Left cardiac atrium (tissue), 4 donors: ENCODE measurements at regions of chr6 and their contacts with region 1.

Region 1: GRCh38 chr6:26025894-26026832 is 61.1 kb upstream of the HFE start:
- DNase-seq: peak; percentile 95
- ATAC-seq: peak; percentile 68 to 70

Region 2: GRCh38 chr6:26045065-26045927 is 19.1 kb after region 1 on chr6:
- intact Hi-C with region 1: loop called in 1 of 2 experiments (anchors 2 kb)
- DNase-seq: peak; percentile 75
- ATAC-seq: peak; percentile 77 to 84

Region 3: DNA sequence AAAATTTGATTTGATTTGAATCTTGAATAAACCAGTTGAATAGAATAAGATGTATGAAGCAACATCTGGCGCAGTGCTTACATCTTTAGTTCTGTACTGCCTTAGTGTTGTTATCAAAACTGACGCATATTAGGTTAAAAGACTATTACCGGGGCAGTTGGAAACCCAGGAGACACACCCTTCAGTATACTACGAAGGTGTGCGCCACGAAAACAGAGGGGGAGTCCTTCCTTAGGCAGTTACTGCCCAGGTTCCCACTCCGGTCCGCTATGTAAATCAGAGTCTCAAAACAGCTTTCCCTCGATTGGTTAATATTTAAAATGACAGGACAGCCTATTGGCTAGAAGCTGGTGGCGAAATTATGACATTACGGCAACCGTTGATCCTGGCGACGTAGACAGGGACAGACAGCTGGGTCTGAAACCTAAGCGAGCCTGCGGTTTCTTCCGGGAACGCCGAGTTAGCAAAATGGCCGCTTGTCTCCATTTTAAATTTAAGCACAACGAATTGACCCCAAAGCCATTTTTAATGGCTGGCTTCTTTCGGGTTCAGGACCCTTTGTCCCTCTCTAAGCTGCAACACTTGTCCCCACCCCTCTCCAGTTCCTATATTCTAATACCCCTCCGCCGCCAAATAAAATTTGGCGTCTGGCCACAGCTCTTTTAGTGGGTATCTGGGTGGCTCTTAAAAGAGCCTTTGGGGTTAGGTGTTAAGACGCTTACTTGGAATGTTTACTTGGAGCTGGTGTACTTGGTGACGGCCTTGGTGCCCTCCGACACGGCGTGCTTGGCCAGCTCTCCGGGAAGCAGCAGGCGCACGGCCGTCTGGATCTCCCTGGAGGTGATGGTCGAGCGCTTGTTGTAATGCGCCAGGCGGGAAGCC is 96.9 kb after region 1 on chr6:
- intact Hi-C with region 1: no loop called
- DNase-seq: peak; percentile 97
- ATAC-seq: peak; percentile 87 to 88

Region 4: DNA sequence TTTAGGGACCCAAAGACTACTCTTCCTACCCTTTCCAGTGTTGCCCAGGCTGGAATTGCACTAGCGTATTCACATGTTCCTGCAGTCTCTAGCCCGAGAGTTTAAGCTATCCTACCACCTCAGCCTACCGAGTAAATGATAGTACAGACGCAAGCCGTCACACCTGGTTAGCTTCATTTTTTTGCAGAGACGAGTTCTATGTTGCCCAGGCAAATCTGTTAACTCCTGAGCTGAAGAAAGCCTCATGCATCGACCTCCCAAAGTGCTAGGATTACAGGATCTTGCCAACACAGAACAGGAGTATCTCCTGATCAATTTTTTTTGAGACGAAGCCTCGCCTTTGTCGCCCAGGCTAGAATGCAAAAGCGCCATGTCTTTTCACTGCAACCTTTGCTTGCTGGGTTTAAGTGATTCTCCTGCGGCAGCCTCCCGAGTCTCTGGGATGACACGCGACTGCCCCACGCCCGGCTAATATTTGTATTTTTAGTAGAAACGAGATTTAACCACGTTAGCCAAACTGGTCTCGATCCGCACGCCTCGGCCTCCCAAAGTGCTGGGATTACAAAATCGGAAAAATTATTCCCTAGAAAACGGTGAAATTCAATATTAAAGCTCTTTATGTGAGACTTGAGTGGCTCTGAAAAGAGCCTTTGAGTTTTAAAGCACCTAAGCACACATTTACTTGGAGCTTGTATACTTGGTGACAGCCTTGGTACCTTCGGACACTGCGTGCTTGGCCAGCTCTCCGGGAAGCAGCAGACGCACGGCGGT is 189.6 kb after region 1 on chr6:
- intact Hi-C with region 1: no loop called
- DNase-seq: no peak
- ATAC-seq: peak; percentile 39 to 63

Region 5: DNA sequence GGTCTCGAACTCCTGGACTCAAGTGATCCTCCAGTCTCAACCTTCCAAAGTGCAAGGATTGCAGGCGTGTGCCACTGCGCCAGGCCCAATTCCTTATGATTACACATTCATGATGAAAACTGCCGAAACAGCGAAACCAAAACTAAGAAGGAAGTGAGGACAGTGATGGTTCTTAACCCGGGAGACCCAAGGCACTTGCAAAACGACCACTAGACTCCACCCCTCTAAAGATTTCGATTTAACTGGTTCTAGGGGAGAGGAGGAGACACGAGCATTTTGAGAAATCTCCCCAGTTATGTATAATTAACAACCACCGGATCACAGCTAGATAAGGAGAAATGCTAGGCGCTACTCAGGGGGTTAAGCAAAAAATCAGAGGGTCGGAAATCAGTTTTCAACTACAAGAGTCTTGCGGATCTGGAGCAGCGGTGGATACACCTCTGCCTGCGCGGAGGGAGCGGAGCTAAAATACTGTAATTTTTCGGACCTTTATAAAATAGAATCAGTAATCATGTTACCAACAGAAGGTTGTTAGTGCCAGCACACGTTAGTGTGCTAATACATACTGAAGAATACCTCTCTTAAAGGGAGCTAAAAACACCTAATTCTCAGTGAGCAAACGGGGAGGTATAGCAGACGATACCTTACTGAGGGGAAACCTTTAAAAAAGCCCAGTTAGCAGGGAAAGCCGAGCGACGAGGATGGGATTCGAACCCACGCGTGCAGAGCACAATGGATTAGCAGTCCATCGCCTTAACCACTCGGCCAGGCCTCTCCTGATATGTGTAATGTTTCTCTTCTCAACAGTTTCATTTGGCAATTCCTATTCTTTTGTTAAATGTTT is 278.9 kb after region 1 on chr6:
- intact Hi-C with region 1: no loop called
- DNase-seq: peak; percentile 74
- ATAC-seq: peak; percentile 88 to 95